ENCODE measurements at regions of chr4 and their contacts with region 1.

Region 1: DNA sequence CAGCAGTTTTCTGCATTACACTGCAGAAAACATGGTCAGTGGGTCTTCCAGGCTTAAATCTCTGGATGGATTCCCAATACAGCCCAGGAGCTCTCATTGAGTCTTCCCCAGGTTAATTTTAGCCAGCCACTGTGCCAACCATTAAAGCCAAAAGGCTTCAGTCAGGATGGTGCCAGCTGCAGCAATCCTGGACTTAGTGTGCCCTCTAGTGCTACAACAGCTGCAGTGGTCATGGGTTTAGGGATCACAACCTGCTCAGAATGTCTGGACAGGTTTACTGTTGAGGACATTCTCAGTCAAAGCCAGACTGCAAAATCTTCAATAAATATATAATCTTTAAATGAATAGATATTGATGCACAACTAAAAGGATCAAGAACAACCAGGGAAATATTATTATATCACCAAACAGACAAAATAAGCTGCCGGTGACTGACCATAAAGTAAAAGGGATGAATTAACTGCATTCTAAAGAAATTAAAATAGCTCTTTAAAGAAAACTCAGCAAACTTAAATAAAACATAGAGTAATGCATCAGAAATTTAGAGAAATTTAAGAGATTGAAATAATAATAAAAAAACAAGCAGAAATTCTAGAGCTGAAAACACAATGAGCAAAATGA is 639.9 kb downstream of the SPOCK3 start:
- DNase-seq: no peak
- ATAC-seq: no peak
- H3K4me3 Mint-ChIP-seq: no peak overlapping the region
- H3K27ac Mint-ChIP-seq: no peak overlapping the region
- H3K4me1 Mint-ChIP-seq: no peaks in the 10 kb centered on the region
- H3K27me3 Mint-ChIP-seq: no peaks in the 10 kb centered on the region
- CTCF ChIP-seq: no peak

Region 2: DNA sequence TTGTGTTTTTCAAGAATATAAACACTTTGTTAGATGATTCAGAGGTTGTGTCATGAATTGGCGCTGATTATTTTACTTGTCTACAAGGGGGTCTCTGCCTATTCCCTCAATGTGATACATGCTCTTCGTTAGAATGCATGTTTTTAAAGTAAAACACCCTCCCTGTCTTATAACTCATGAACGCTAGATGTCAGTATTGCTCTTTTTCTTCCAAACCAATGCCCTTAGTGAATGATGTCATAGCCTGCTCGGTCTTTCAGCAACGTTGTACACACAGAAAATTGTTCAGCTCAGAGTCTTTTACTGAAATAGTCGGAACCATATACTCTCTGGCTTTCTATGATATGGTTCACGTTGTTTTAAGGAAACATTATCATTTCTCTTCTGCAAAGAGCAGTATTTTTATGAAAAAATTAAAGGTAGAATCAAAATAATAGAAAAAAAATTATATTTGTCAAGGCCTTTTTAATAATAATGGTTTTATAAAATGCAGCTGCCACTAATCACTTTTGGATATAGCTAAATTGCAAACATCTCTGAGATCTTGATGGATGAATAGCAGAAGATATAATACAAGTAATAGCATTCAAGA is 428.5 kb before region 1 on chr4:
- CTCF ChIA-PET with region 1: interaction called, 3 read pairs
- POLR2A ChIA-PET with region 1: no interaction called
- intact Hi-C with region 1: loop called (anchors 2 kb)
- DNase-seq: no peak
- ATAC-seq: peak; percentile 60
- H3K4me3 Mint-ChIP-seq: no peak overlapping the region
- H3K27ac Mint-ChIP-seq: no peak overlapping the region
- H3K4me1 Mint-ChIP-seq: no peaks in the 10 kb centered on the region
- H3K27me3 Mint-ChIP-seq: no peaks in the 10 kb centered on the region
- CTCF ChIP-seq: no peak

Region 3: DNA sequence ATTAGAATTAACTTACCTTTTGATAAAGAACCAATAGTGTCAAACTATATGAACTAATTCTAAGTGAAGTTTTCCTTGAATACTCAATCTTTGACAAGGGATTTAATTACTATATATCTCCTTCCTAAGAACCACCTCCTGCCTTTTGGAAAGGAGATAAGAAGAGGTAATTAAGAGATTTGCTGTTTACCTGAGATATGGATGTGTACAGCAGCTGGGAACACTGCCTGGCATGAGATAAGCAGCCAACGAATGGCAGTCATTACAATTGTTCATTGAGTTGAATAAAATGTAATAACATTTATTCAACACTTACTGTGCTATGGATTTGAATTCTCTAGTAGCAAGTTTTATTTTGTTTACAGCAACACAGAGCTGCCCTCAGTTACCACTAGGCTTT is 232.7 kb after region 1 on chr4:
- CTCF ChIA-PET with region 1: no interaction called
- POLR2A ChIA-PET with region 1: no interaction called
- intact Hi-C with region 1: no loop called
- DNase-seq: no peak
- ATAC-seq: no peak
- H3K4me3 Mint-ChIP-seq: no peak overlapping the region
- H3K27ac Mint-ChIP-seq: no peak overlapping the region
- H3K4me1 Mint-ChIP-seq: no peaks in the 10 kb centered on the region
- H3K27me3 Mint-ChIP-seq: no peaks in the 10 kb centered on the region
- CTCF ChIP-seq: no peak

Measured in activated B cell treated with CpG ODN at 0.5 μM for 24 hours (primary cell).